ENCODE measurements at regions of chr11 and their contacts with region 1.

Region 1: GRCh38 chr11:44269369-44270351 is 40.3 kb downstream of the ALX4 start:
- DNase-seq: no peak
- H3K4me3 ChIP-seq: no peak overlapping the region
- H3K27me3 ChIP-seq: no peaks in the 10 kb centered on the region
- CTCF ChIP-seq: no peak

Region 2: GRCh38 chr11:44243595-44244343 is 25.9 kb before region 1 on chr11:
- CTCF ChIA-PET with region 1: no interaction called
- POLR2A ChIA-PET with region 1: interaction called, 22 read pairs
- DNase-seq: no peak
- H3K4me3 ChIP-seq: no peak overlapping the region
- H3K27me3 ChIP-seq: no peaks in the 10 kb centered on the region
- CTCF ChIP-seq: no peak

Region 3: DNA sequence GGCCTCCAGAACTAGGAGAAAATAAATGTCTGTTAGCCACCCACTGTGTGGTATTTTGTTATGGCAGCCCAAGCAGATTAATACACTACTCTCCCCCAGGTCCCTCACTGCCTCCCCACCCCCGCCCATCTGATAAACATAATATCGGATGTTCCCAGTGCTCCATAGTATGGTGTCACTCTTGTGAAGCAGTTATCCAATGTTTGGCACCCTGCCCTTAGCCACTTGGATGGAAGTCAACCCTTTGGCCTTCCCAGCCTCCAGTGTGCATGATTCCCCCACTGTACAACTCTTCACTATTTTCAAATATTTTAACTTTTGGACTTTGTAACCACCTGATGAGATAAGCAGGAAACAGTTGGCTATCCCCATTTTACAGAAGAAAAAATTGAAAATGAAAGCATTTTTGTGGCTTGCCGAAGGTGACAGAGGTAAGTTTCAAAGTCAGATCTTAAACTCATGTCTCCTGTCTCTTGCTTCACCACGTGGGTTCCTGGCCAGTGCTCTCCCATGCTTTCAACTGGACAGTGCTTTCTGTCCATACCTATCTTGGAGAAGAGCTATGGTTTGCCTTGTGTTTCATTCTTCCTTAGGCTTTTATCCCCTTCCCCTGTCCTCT is 12.9 kb before region 1 on chr11:
- CTCF ChIA-PET with region 1: interaction called, 10 read pairs
- POLR2A ChIA-PET with region 1: no interaction called
- DNase-seq: no peak
- H3K4me3 ChIP-seq: no peak overlapping the region
- H3K27me3 ChIP-seq: no peaks in the 10 kb centered on the region
- CTCF ChIP-seq: no peak

Measured in BJ (cell line).